GM18951 (cell line): ENCODE measurements at regions of chr1 and their contacts with region 1.

Region 1: GRCh38 chr1:63935143-63935542 is 161.3 kb downstream of the ROR1 start:
- POLR2A ChIP-seq: no peak

Region 2: DNA sequence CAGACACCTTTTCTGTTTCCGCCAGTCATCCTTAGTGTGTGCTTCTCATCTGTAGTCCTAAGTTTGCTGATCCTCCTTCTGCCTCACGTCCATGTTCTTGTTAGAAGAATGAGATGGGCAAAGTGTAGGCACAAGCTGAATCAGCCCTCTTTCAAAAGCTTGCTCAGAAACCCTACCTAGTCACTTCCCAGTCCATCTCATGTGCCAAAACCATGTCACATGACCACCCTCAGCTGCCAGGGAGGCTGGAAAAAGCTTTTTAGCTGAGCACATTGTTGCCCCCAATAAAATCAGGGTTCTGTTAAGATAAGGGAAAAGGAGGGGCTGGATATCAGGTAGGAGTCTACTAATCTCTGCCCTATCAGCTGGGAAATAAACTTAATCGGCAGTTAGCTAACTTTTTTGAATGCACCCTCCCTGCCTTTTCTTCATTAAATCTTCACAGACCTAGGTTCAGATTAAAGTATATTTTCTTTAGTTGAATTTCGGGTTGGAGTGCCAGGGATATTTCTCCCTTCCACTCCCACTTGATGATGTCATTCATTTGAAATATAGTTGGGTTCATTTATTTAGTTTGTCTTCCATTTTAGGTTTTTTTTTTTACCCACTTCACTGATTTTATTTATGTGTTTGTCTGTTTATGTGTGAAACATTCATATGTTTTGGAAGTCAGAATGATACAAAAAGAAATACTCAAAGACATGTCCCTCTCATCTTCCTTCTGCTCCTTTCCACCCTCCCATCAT is 32.1 kb before region 1 on chr1:
- in situ Hi-C with region 1: no loop called
- POLR2A ChIP-seq: no peak

Region 3: DNA sequence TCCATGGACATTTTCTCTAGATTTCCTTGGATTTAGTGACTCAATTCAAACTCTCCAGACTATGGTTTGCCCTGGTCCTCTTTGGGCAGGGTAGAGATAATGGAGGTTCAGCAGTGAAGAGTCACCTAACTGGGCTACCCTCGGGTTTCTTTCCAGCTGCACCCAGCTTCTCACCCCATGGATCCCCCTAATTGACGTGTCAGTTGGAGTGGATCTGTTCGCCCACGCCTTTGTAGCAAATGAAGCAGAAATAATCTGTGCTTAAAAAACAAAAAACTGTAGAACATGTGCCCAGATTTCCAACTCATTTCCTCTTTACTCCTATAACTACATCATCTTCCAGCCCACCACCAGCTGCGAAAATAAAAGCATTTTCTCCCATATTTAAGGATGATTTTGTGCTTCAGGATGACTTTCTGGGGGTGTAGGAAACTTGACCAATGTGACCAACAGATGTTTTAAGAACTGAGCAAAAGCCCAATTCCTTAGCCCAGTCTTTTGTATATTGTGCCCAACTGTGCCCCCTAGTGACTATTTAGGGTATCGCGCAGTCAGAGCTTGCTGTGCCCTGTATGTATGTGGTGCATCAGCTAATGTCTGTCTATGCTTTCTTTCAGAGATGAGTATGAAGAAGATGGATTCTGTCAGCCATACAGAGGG is 201.7 kb after region 1 on chr1:
- in situ Hi-C with region 1: loop called (anchors 10 kb)
- POLR2A ChIP-seq: no peak